ENCODE measurements at regions of chr5 and their contacts with region 1.

Region 1: GRCh38 chr5:133779828-133780475 is 167.6 kb upstream of the FSTL4 start:
- DNase-seq: no peak
- ATAC-seq: peak; percentile 31 to 63 (median 62)
- H3K4me3 ChIP-seq: no peak overlapping the region
- H3K27ac ChIP-seq: peak overlapping the region; percentile 48
- H3K4me1 ChIP-seq: peaks cover 5% of the 10 kb centered on the region
- H3K27me3 ChIP-seq: no peaks in the 10 kb centered on the region
- CTCF ChIP-seq: no peak

Region 2: GRCh38 chr5:133818031-133818431 is 38.1 kb after region 1 on chr5:
- intact Hi-C with region 1: loop called in 1 of 2 experiments (anchors 5 kb)
- DNase-seq: peak; percentile 78 to 86
- ATAC-seq: peak; percentile 89 to 94 (median 94)
- H3K4me3 ChIP-seq: no peak overlapping the region
- H3K27ac ChIP-seq: peak overlapping the region; percentile 89
- H3K4me1 ChIP-seq: peaks cover 41% of the 10 kb centered on the region
- H3K27me3 ChIP-seq: no peaks in the 10 kb centered on the region
- CTCF ChIP-seq: no peak